ENCODE measurements at regions of chr15 and their contacts with region 1.

Region 1: DNA sequence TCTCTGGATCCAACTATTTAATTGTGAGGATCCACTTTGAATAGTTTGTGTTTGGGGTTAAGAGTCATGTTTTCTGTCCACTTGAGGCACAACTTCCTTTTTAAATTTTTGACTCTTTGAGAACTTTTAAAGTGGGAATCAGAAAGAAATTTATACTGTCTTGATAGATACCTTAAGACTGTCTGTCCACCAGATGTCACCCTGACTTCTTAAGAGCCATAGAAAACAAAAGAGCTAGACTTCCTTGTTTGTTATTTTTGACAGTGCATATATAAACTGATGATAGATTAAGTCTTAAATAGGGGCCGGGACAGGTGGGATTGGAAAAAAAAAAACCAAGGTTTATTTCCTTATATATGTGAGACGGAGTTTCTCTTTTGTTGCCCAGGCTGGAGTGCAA is 52.1 kb upstream of the WDR72 start:
- DNase-seq: no peak
- ATAC-seq: no peak
- H3K4me3 ChIP-seq: no peak overlapping the region
- H3K27ac ChIP-seq: no peak overlapping the region
- H3K4me1 ChIP-seq: no peaks in the 10 kb centered on the region
- H3K27me3 ChIP-seq: no peaks in the 10 kb centered on the region

Region 2: DNA sequence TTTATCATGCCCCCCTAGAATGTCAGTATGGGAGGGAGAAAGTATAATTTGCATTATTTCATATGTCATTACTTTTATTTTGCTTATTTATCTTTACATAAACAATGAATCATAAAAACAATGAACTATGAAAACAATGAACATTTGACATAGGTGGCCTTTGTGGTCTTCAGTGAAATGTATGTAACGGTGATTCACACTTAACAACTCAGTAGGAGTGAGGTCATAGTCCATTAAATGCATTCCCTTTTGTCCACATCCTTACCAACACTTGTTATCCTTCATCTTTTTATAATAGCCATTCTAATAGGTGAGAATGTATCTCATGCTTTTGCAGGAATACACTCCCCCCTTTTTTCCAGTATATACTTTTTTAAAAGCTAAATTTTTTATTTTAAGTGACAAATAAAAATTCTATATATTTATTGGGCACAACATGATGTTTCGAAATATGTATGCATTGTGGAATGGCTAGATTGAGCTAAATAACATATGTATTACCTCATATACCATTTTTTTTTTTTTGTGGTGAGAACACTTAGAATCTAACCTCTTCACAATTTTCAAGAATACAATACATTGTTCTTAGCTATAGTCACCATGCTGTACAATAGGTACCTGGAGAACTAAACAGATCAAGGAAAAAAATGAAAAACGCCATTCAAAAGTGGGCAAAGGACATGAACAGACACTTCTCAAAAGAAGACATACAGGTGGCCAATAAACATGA is 241.6 kb before region 1 on chr15:
- intact Hi-C with region 1: no loop called
- DNase-seq: no peak
- ATAC-seq: no peak
- H3K4me3 ChIP-seq: no peak overlapping the region
- H3K27ac ChIP-seq: no peak overlapping the region
- H3K4me1 ChIP-seq: no peaks in the 10 kb centered on the region
- H3K27me3 ChIP-seq: peaks cover 0 to 1% of the 10 kb centered on the region in 2 donors

Region 3: GRCh38 chr15:53872410-53872809 is 60.9 kb after region 1 on chr15:
- intact Hi-C with region 1: loop called in 1 of 2 experiments (anchors 10 kb)
- DNase-seq: no peak
- ATAC-seq: no peak
- H3K4me3 ChIP-seq: no peak overlapping the region
- H3K27ac ChIP-seq: no peak overlapping the region
- H3K4me1 ChIP-seq: no peaks in the 10 kb centered on the region
- H3K27me3 ChIP-seq: no peaks in the 10 kb centered on the region

Region 4: GRCh38 chr15:53962332-53963241 is 151.1 kb after region 1 on chr15:
- intact Hi-C with region 1: loop called in 1 of 2 experiments (anchors 10 kb)
- DNase-seq: peak; percentile 33 to 70
- ATAC-seq: no peak
- H3K4me3 ChIP-seq: no peak overlapping the region
- H3K27ac ChIP-seq: no peak overlapping the region
- H3K4me1 ChIP-seq: no peaks in the 10 kb centered on the region
- H3K27me3 ChIP-seq: no peaks in the 10 kb centered on the region

Region 5: GRCh38 chr15:54150255-54150654 is 338.7 kb after region 1 on chr15:
- intact Hi-C with region 1: no loop called
- DNase-seq: no peak
- ATAC-seq: no peak
- H3K4me3 ChIP-seq: no peak overlapping the region
- H3K27ac ChIP-seq: no peak overlapping the region
- H3K4me1 ChIP-seq: no peaks in the 10 kb centered on the region
- H3K27me3 ChIP-seq: no peaks in the 10 kb centered on the region